ENCODE measurements at regions of chr6 and their contacts with region 1.

Region 1: GRCh38 chr6:32947552-32948465 is 5.1 kb downstream of the HLA-DMA start:
- DNase-seq: peak; percentile 73
- H3K4me3 ChIP-seq: peak overlapping the region; percentile 75
- H3K27ac ChIP-seq: peak overlapping the region; percentile 99
- H3K4me1 ChIP-seq: peaks cover 84% of the 10 kb centered on the region
- CTCF ChIP-seq: peak; percentile 97

Region 2: DNA sequence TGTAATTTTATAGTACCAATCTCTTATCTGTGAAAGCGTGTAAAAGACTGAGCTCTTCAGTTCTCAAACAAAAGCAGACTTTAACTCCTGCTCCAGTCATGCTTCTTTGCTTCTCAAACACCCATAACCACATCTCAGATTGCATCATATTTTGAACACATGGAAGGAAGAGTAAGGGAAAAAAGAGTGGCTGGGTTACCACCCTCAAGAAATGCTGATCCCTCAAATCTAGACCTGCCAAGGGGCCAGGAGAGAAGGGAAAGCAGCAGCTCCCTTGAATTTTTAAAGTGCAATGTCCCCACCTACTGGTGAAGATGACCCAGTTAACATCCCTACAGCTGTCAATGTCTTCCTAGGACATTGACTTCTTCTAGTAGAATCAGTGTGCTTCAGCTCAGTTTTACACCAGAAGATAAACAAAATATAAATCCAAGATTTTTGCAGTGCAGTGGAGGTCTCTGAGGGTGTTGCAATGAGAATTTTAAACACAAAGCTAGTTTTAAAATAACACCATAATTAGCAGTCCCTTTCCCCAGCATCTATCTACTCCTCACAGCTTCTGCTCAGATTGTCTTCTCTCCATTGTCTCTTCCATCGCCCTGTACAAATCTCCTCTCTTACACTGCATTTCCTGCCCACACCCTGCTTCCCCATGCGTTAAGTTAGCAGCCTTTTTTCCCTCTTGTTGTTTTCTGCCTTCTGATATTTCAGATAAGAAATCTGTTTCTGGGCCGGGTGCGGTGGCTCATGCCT is 161.9 kb before region 1 on chr6:
- CTCF ChIA-PET with region 1: no interaction called
- POLR2A ChIA-PET with region 1: no interaction called
- intact Hi-C with region 1: no loop called
- DNase-seq: peak; percentile 73
- H3K4me3 ChIP-seq: no peak overlapping the region
- H3K27ac ChIP-seq: no peak overlapping the region
- H3K4me1 ChIP-seq: no peaks in the 10 kb centered on the region
- CTCF ChIP-seq: peak; percentile 85

Region 3: DNA sequence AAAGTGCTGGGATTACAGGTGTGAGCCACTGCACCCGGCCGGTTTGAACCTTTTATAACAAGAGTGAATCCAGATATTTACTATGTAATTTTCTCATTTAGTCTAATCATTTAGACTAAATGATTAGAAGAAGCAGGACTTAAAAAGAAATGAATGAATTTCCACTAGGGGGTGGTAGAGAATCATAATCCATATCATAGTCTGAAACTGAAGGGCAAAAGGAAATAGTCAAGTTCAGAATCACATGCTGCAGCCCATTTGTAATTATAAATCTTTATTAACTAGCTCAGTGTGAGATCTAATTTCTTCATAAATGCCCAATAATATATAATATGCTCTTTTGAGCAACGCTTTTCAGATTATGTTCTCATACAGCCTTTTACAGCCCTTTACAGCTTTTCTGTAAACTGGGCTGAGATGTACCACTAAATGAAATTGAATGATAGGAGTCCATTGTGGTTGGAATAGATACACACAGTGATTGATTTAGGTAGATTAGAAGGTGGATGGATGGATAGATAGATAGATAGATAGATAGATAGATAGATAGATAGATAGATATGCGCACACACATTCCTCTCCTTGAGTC is 62.0 kb before region 1 on chr6:
- CTCF ChIA-PET with region 1: interaction called, 3 read pairs
- POLR2A ChIA-PET with region 1: interaction called, 5 read pairs
- intact Hi-C with region 1: loop called (anchors 1 kb)
- DNase-seq: peak; percentile 86
- H3K4me3 ChIP-seq: no peak overlapping the region
- H3K27ac ChIP-seq: no peak overlapping the region
- H3K4me1 ChIP-seq: peaks cover 19% of the 10 kb centered on the region
- CTCF ChIP-seq: peak; percentile 86

Region 4: GRCh38 chr6:32933636-32934085 is 14.1 kb before region 1 on chr6:
- CTCF ChIA-PET with region 1: interaction called, 12 read pairs
- POLR2A ChIA-PET with region 1: interaction called, 71 read pairs
- intact Hi-C with region 1: loop called (anchors 1 kb)
- DNase-seq: peak; percentile 77
- H3K4me3 ChIP-seq: no peak overlapping the region
- H3K27ac ChIP-seq: peak overlapping the region; percentile 34
- H3K4me1 ChIP-seq: peaks cover 37% of the 10 kb centered on the region
- CTCF ChIP-seq: peak; percentile 99

Region 5: GRCh38 chr6:33126101-33126714 is 178.4 kb after region 1 on chr6:
- CTCF ChIA-PET with region 1: no interaction called
- POLR2A ChIA-PET with region 1: no interaction called
- intact Hi-C with region 1: no loop called
- DNase-seq: peak; percentile 75
- H3K4me3 ChIP-seq: no peak overlapping the region
- H3K27ac ChIP-seq: no peak overlapping the region
- H3K4me1 ChIP-seq: no peaks in the 10 kb centered on the region
- CTCF ChIP-seq: peak; percentile 94

Measured in OCI-LY7 (cell line).